ENCODE measurements at regions of chr7 and their contacts with region 1.

Region 1: DNA sequence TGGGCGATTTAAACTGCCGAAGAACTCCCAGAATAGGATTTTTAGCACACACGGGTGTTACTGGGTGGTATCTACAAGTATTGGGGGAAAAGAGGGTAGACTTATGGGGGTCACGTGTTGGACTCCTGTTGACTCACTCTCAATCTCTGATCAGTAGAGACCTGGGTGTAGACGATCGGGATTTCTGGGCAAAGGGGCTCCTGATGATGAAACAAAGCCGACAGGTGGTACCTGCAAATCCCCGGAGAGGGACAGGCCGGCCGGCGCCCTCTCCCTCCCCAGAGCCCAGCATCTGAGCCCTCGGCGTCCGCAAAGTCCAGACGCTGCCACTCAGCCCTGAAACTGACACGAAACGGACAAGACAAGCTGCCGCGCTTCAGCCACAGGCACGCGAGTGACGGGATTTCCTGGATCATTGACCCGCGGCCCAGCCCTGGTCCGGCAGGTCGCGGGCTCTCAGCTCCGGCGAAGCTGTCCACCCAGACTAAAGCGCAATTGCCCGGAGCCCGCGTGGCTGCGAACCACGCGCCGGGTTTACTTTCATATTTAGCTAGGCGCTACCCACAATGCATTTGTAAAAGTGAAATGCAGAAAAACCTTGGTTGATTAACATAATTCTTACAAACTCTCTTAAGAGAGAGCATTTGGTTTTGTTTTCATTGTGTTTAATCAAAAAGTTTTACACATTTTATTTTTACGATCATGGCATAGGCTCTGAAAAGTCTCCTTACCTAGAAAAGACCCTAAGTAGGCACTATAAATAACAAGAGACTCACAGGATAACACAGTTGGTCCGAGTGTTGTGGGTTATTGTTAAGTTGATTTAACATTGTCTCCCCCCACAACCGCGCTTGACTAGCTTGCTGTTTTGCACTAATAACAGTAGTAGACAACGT is 56.9 kb upstream of the EZH2 start:
- DNase-seq: peak; percentile 77
- H3K4me3 ChIP-seq: peak overlapping the region; percentile 67 to 74 (median 73)
- H3K27ac ChIP-seq: peak overlapping the region; percentile 97
- H3K4me1 ChIP-seq: no peaks in the 10 kb centered on the region
- H3K27me3 ChIP-seq: no peaks in the 10 kb centered on the region
- CTCF ChIP-seq: no peak

Region 2: DNA sequence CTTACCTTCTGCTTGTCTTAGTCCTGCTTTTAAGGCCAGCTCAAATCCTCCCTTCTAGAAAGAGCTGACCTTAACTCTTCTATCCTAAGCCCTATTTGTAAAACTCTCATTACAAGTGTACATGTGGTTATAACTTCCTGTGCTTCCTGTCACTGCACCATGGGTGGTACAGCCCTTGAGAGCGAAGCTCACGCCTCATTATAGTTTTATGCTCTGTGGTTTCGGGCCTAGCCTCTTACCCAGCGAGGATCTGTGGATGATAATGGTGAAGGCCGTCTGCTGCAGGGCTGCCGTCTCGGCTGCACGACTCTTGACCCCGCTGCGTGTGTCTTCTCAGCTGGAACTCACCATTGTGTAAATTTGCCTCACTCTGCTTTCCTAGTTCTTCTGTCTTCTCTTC is 167.6 kb before region 1 on chr7:
- CTCF ChIA-PET with region 1: no interaction called
- dilution Hi-C with region 1: no loop called
- in situ Hi-C with region 1: no loop called
- intact Hi-C with region 1: loop called (anchors 2 kb)
- DNase-seq: no peak
- H3K4me3 ChIP-seq: no peak overlapping the region
- H3K27ac ChIP-seq: peak overlapping the region; percentile 32
- H3K4me1 ChIP-seq: peaks cover 14% of the 10 kb centered on the region
- H3K27me3 ChIP-seq: no peaks in the 10 kb centered on the region
- CTCF ChIP-seq: no peak

Region 3: DNA sequence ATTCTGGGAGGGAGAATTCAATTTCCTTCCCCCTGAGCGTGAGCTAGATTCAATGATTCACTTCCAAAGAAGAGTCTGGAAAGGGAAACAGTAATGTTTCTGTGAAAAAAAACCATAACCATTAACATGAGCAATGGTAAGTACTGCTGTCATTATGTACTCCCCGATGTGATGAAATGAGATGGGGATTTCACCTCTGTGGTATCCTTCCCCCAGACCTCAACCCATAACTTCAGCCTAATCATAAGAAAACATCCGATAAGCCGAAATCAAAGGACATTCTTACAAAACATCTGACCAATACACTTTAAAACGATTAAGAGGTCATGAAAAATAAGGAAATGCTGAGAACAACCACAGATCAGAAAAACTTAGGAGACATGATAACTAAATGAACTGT is 84.1 kb before region 1 on chr7:
- CTCF ChIA-PET with region 1: interaction called, 5 read pairs
- dilution Hi-C with region 1: no loop called
- in situ Hi-C with region 1: no loop called
- intact Hi-C with region 1: loop called (anchors 1 kb)
- DNase-seq: peak; percentile 43
- H3K4me3 ChIP-seq: no peak overlapping the region
- H3K27ac ChIP-seq: no peak overlapping the region
- H3K4me1 ChIP-seq: no peaks in the 10 kb centered on the region
- H3K27me3 ChIP-seq: no peaks in the 10 kb centered on the region
- CTCF ChIP-seq: no peak

Region 4: GRCh38 chr7:148901178-148901577 is 39.8 kb before region 1 on chr7:
- CTCF ChIA-PET with region 1: no interaction called
- dilution Hi-C with region 1: no loop called
- in situ Hi-C with region 1: no loop called
- intact Hi-C with region 1: loop called (anchors 5 kb)
- DNase-seq: peak; percentile 88
- H3K4me3 ChIP-seq: no peak overlapping the region
- H3K27ac ChIP-seq: peak overlapping the region; percentile 24
- H3K4me1 ChIP-seq: peaks cover 8% of the 10 kb centered on the region
- H3K27me3 ChIP-seq: no peaks in the 10 kb centered on the region
- CTCF ChIP-seq: no peak

Region 5: DNA sequence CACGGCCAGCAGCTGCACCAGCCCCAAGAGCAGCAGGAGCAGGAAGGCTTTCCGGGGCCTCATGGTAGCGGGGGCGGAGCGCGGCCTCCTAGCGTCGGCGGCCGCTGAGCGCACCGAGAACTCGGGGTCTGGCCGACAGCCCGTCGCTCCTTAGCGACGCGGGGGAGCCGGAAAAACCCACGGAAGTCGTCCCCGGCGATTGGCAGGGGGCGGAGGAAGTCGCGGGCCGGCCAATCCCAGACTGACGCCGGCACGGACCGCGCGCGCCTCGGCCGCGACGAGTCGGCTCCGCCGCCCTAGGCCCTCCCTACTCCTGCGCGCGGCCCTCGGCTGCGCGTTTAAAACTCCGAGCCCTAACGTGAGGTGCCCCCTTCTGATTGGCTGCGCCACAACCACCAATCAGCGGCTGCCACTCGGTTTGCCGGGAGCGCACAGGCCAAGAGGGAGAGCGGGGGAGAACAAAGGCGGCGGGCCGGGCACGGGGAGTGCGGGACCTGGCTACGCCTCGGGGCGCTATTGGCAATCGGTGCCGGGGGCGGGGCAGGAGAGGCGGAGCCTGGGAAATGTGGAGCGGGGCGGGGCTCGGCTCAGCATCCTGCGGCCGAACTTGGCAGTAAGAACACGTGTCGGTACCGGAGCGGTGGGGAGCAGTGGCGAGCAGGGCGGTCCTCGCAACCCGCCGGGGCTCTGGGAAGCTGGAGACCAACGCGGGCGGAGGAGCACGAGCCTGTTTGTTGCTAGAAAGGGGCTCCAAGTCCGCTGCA is 87.6 kb after region 1 on chr7 and contains the start of gene PDIA4:
- CTCF ChIA-PET with region 1: no interaction called
- dilution Hi-C with region 1: no loop called
- in situ Hi-C with region 1: no loop called
- intact Hi-C with region 1: no loop called
- DNase-seq: peak; percentile 100
- H3K4me3 ChIP-seq: peak within 1 kb of the TSS; percentile 82 to 93 (median 90)
- H3K27ac ChIP-seq: peak within 1 kb of the TSS; percentile 75
- H3K4me1 ChIP-seq: peaks cover 21% of the 10 kb centered on the region
- H3K27me3 ChIP-seq: no peaks in the 10 kb centered on the region
- CTCF ChIP-seq: peak in 1 of 2 donors; percentile 31
- total RNA-seq, gene PDIA4: 175 to 189 TPM

Measured in mammary epithelial cell (primary cell).